Activated CD4-positive, alpha-beta T cell treated with anti-CD3 and anti-CD28 coated beads for 36 hours (primary cell): ENCODE measurements at regions of chr20 and their contacts with region 1.

Region 1: GRCh38 chr20:17682103-17682888 is at the start of gene RRBP1:
- DNase-seq: peak; percentile 98
- ATAC-seq: peak; percentile 97
- H3K4me3 Mint-ChIP-seq: peak within 1 kb of the TSS; percentile 76
- H3K27ac Mint-ChIP-seq: peak within 1 kb of the TSS; percentile 74
- H3K4me1 Mint-ChIP-seq: peaks cover 16% of the 10 kb centered on the region
- H3K27me3 Mint-ChIP-seq: peaks cover 20% of the 10 kb centered on the region
- total RNA-seq, gene RRBP1: 21.1 to 24.9 TPM

Region 2: DNA sequence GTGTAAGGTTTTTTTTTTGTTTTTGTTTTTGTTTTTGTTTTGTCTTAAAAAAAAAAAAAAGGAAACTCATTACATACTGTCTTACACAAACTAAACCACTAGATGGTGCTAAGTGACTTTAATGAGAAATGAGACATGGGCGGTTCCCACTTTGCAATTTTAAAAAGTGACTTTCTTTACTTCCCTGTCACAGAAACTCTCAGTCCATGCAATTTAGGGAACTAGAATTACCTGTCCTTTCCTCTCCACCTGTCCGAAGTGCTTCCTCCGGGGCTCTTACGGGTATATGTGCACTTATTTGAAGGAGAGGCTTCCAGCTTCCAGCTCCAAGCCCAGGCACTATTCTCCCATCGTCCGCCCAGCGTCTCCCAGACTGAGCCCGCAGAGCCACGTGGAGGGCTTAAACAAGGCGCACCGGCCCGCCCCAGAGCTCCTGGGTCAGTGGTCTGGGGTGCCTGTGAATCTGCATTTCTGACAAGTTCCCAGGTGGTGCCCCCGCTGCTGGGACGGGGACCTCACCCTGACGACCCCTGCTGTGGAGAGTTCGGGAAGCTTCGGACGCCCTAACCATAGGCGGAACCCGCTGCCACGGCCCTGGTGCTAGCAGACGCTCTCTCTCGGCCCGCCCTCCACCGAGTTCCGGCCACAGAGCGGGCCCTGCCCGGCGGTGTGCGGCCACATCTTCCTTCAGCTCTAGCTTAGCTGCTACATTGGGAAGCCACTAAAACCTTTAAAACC is 177.2 kb before region 1 on chr20:
- CTCF ChIA-PET with region 1: interaction called, 16 read pairs
- POLR2A ChIA-PET with region 1: interaction called, 5 read pairs
- intact Hi-C with region 1: loop called (anchors 1 kb)
- DNase-seq: peak; percentile 53
- ATAC-seq: peak; percentile 68
- H3K4me3 Mint-ChIP-seq: peak overlapping the region; percentile 70
- H3K27ac Mint-ChIP-seq: peak overlapping the region; percentile 80
- H3K4me1 Mint-ChIP-seq: peaks cover 27% of the 10 kb centered on the region
- H3K27me3 Mint-ChIP-seq: no peaks in the 10 kb centered on the region

Region 3: GRCh38 chr20:17666481-17666880 is 15.8 kb before region 1 on chr20:
- CTCF ChIA-PET with region 1: interaction called, 17 read pairs
- POLR2A ChIA-PET with region 1: no interaction called
- intact Hi-C with region 1: no loop called
- DNase-seq: no peak
- ATAC-seq: no peak
- H3K4me3 Mint-ChIP-seq: no peak overlapping the region
- H3K27ac Mint-ChIP-seq: no peak overlapping the region
- H3K4me1 Mint-ChIP-seq: peaks cover 48% of the 10 kb centered on the region
- H3K27me3 Mint-ChIP-seq: no peaks in the 10 kb centered on the region

Region 4: GRCh38 chr20:17938871-17939619 is 256.7 kb after region 1 on chr20:
- CTCF ChIA-PET with region 1: interaction called, 19 read pairs
- POLR2A ChIA-PET with region 1: interaction called, 4 read pairs
- intact Hi-C with region 1: loop called in 1 of 2 experiments (anchors 1 kb)
- DNase-seq: peak; percentile 76
- ATAC-seq: peak; percentile 83
- H3K4me3 Mint-ChIP-seq: no peak overlapping the region
- H3K27ac Mint-ChIP-seq: no peak overlapping the region
- H3K4me1 Mint-ChIP-seq: peaks cover 14% of the 10 kb centered on the region
- H3K27me3 Mint-ChIP-seq: no peaks in the 10 kb centered on the region

Region 5: GRCh38 chr20:17995967-17996819 is 313.9 kb after region 1 on chr20:
- CTCF ChIA-PET with region 1: interaction called, 7 read pairs
- POLR2A ChIA-PET with region 1: no interaction called
- intact Hi-C with region 1: loop called (anchors 1 kb)
- DNase-seq: peak; percentile 56
- ATAC-seq: peak; percentile 60
- H3K4me3 Mint-ChIP-seq: no peak overlapping the region
- H3K27ac Mint-ChIP-seq: no peak overlapping the region
- H3K4me1 Mint-ChIP-seq: peaks cover 27% of the 10 kb centered on the region
- H3K27me3 Mint-ChIP-seq: no peaks in the 10 kb centered on the region

Region 6: DNA sequence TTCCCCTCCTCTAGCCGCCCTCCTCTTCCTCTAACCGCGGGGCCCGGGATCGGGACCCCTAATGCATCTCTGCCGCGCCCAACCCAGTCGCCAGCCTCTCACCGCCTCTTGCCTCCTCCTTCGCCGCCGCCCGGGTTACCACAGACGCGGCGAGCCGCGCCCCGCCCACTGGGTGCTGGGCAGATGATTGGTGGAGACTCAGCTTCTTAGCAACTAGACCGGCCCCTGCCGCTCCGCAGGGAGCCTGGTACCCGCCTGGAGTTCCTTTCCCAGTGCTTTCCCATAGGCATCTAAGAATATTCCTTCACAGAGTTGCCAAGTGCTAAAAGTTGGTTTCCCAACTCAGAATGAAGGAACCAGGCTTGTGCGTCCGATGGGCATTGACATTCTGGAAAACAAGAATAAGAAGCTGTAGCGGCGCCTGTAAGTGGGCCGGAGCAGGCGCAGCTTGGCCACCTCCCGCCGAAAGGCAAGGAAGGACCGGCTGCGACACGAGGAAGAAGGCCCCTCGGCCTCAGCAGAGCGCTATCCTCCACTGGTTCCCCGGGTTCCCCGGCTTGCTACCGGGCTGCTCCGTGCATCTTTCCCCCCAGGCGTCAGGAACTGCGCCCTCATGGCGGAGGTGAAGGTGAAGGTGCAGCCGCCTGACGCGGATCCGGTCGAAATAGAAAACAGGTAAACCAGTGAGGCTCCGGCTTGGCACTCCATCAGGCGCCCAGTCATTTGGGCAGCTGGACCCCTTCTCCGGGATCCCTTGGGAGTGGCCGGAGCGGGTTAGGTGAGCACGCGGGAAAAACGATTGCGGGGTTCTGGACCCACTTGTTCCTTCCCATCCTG is 784.8 kb after region 1 on chr20 and contains the starts of genes DZANK1 and POLR3F:
- CTCF ChIA-PET with region 1: no interaction called
- POLR2A ChIA-PET with region 1: no interaction called
- intact Hi-C with region 1: loop called in 1 of 2 experiments (anchors 1 kb)
- DNase-seq: peak; percentile 96
- ATAC-seq: peak; percentile 99
- H3K4me3 Mint-ChIP-seq: peak within 1 kb of the TSS; percentile 91
- H3K27ac Mint-ChIP-seq: peak within 1 kb of the TSS; percentile 89
- H3K4me1 Mint-ChIP-seq: peaks cover 21% of the 10 kb centered on the region
- H3K27me3 Mint-ChIP-seq: no peaks in the 10 kb centered on the region
- total RNA-seq, gene DZANK1: 1.4 to 2.0 TPM
- total RNA-seq, gene POLR3F: 9.8 to 11.8 TPM

Region 7: GRCh38 chr20:18793625-18794427 is 1111.5 kb after region 1 on chr20:
- CTCF ChIA-PET with region 1: no interaction called
- POLR2A ChIA-PET with region 1: no interaction called
- intact Hi-C with region 1: loop called in 1 of 2 experiments (anchors 5 kb)
- DNase-seq: peak; percentile 92
- ATAC-seq: peak; percentile 98
- H3K4me3 Mint-ChIP-seq: peak overlapping the region; percentile 87
- H3K27ac Mint-ChIP-seq: peak overlapping the region; percentile 96
- H3K4me1 Mint-ChIP-seq: peaks cover 17% of the 10 kb centered on the region
- H3K27me3 Mint-ChIP-seq: peaks cover 7% of the 10 kb centered on the region